Activated T-helper 1 cell treated with anti-CD3 and anti-CD28 coated beads, Interleukin-12 subunit alpha, Interleukin-12 subunit beta, Interleukin-2, Interleukin-4 antibody, amounts not matched to agents 30 ng/mL and 10 ng/mL and 1 ng/mL, durations not matched to agents 14 hours and 24 hours and 36 hours (primary cell): ENCODE measurements at regions of chr10 and their contacts with region 1.

Region 1: GRCh38 chr10:27688991-27689390 is 56.6 kb downstream of the MKX start:
- DNase-seq: no peak
- H3K4me3 Mint-ChIP-seq: no peak overlapping the region
- H3K27ac Mint-ChIP-seq: no peak overlapping the region
- H3K4me1 Mint-ChIP-seq: no peaks in the 10 kb centered on the region
- H3K27me3 Mint-ChIP-seq: peaks cover 2% of the 10 kb centered on the region

Region 2: GRCh38 chr10:27723436-27723835 is 34.4 kb after region 1 on chr10:
- intact Hi-C with region 1: loop called (anchors 1 kb)
- DNase-seq: no peak
- H3K4me3 Mint-ChIP-seq: no peak overlapping the region
- H3K27ac Mint-ChIP-seq: no peak overlapping the region
- H3K4me1 Mint-ChIP-seq: no peaks in the 10 kb centered on the region
- H3K27me3 Mint-ChIP-seq: peaks cover 11% of the 10 kb centered on the region